ENCODE measurements at regions of chr11 and their contacts with region 1.

Region 1: DNA sequence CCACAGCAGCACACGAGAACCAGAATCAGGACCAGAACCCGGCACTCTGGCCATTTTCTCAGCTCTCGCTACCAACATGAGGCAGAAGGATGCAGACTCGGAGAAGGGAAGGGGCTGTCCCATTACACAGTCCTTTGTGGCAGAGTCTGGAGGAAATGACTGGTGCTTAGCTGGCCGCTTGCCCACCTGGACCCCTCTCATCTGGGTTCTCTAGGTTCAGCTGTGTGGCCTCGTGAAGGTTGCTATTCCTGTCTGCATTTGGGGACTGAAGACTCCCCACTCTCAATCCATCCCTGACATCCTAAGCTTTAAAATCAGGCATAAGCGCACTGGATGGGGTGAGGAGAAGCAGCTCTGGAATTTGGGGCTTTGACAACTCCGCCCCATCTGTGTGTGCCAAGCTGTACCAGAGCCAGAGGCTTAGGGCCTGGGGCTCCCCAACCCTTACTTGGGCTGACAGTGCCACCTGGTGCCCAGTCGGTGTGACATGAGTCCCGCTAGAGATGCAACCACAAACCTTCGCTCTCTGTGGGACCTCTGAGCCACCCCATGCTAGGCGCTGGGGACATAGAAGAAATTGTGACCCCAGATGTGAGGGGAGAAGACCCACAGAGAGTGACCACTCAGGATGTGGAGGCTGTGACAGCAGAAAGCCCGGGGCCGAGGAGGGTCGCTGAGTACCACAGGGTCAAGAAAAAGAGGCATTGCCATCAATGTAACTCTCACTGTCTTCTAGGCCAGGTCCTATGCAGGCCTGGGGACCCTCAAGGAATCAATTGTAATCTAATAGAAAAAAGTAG is 35.9 kb upstream of the FCHSD2 start:
- DNase-seq: peak; percentile 86
- H3K4me3 ChIP-seq: no peak overlapping the region; a peak in 1 of 4 replicates
- H3K27ac ChIP-seq: no peak overlapping the region
- H3K4me1 ChIP-seq: peaks cover 5 to 10% of the 10 kb centered on the region in 2 experiments; a peak in 2 of 4 replicates
- H3K27me3 ChIP-seq: no peaks in the 10 kb centered on the region; the same call in 1 of the 2 replicates
- CTCF ChIP-seq: peak; percentile 79
- EP300 ChIP-seq: no peak
- RAD21 ChIP-seq: peak; percentile 98

Region 2: GRCh38 chr11:72821883-72822799 is 355.8 kb before region 1 on chr11:
- CTCF ChIA-PET with region 1: interaction called, 271 read pairs
- POLR2A ChIA-PET with region 1: interaction called, 4 read pairs
- DNase-seq: peak; percentile 98
- H3K4me3 ChIP-seq: peak overlapping the region; percentile 43 to 61
- H3K27ac ChIP-seq: peak overlapping the region in 1 of 2 experiments; percentile 73; a peak in 2 of 4 replicates
- H3K4me1 ChIP-seq: peaks cover 5 to 21% of the 10 kb centered on the region in 2 experiments; a peak in 2 of 4 replicates
- H3K27me3 ChIP-seq: no peaks in the 10 kb centered on the region
- CTCF ChIP-seq: 0 out of 2 replicates have a peak, but pooled peaks have one; percentile 13
- EP300 ChIP-seq: no peak
- RAD21 ChIP-seq: no peak; the same call in 1 of the 2 replicates

Region 3: GRCh38 chr11:72924568-72925190 is 253.3 kb before region 1 on chr11:
- CTCF ChIA-PET with region 1: interaction called, 42 read pairs
- POLR2A ChIA-PET with region 1: no interaction called
- DNase-seq: peak; percentile 22
- H3K4me3 ChIP-seq: no peak overlapping the region
- H3K27ac ChIP-seq: no peak overlapping the region
- H3K4me1 ChIP-seq: no peaks in the 10 kb centered on the region; a peak in 1 of 4 replicates
- H3K27me3 ChIP-seq: no peaks in the 10 kb centered on the region
- CTCF ChIP-seq: peak; percentile 61
- EP300 ChIP-seq: no peak
- RAD21 ChIP-seq: peak; percentile 69

Region 4: GRCh38 chr11:73099512-73100266 is 78.3 kb before region 1 on chr11:
- CTCF ChIA-PET with region 1: no interaction called
- POLR2A ChIA-PET with region 1: no interaction called
- DNase-seq: no peak
- H3K4me3 ChIP-seq: no peak overlapping the region
- H3K27ac ChIP-seq: no peak overlapping the region
- H3K4me1 ChIP-seq: 0 out of 4 replicates have a peak, but pooled peaks cover 0 to 6% of the 10 kb centered on the region in 2 experiments
- H3K27me3 ChIP-seq: no peaks in the 10 kb centered on the region
- CTCF ChIP-seq: no peak
- EP300 ChIP-seq: no peak
- RAD21 ChIP-seq: no peak

Region 5: GRCh38 chr11:73147771-73148681 is 30.0 kb before region 1 on chr11:
- CTCF ChIA-PET with region 1: interaction called, 25 read pairs
- POLR2A ChIA-PET with region 1: no interaction called
- DNase-seq: peak; percentile 28
- H3K4me3 ChIP-seq: no peak overlapping the region
- H3K27ac ChIP-seq: peak overlapping the region in 1 of 2 experiments; percentile 43; a peak in 1 of 4 replicates
- H3K4me1 ChIP-seq: peaks cover 0 to 26% of the 10 kb centered on the region in 2 experiments; a peak in 2 of 4 replicates
- H3K27me3 ChIP-seq: no peaks in the 10 kb centered on the region
- CTCF ChIP-seq: no peak
- EP300 ChIP-seq: no peak
- RAD21 ChIP-seq: no peak

Region 6: GRCh38 chr11:73164803-73165540 is 13.0 kb before region 1 on chr11:
- CTCF ChIA-PET with region 1: interaction called, 63 read pairs
- POLR2A ChIA-PET with region 1: interaction called, 3 read pairs
- DNase-seq: no peak
- H3K4me3 ChIP-seq: no peak overlapping the region
- H3K27ac ChIP-seq: no peak overlapping the region
- H3K4me1 ChIP-seq: peaks cover 0 to 2% of the 10 kb centered on the region in 2 experiments; a peak in 1 of 4 replicates
- H3K27me3 ChIP-seq: no peaks in the 10 kb centered on the region
- CTCF ChIP-seq: no peak
- EP300 ChIP-seq: no peak
- RAD21 ChIP-seq: no peak